ENCODE measurements at regions of chr5 and their contacts with region 1.

Region 1: DNA sequence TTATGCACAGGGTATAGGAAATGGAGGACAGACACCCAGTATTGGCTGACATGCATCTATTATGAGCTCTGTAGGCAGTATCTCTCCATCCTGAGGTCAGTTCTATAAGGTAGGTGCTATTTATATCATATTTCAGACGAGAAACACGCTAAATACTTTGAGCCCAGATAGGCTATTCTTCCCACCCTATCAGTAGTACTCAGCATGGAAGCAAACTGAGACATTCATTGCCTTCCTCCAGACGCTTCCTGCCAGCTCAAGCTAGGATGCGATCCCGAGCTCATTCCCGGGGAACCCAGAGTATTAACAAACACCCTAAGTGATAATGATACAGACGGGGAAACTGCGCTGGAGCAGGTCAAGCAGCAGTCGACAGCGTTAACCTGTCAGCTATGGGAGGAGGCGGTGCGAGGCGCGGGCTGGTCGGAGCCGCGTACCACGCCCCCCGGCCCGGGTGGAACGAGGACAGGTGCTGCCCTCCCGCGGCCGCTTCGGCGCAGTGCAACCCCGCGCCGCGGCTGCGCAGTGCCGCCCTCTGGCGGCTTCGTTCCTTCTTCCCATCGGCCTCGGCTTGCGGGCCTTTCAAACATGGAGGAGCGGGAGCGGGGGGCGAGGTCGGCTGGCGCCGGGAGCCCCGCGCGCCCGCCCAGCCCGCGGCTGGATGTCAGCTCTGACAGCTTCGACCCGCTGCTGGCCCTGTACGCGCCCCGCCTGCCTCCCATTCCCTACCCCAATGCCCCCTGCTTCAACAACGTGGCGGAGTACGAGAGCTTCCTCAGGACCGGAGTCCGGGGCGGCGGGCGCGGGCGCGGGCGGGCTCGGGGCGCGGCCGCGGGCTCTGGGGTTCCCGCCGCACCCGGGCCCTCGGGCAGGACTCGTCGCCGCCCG is at the start of gene LSM11:
- DNase-seq: peak; percentile 75 to 96 (median 88)
- ATAC-seq: peak; percentile 97
- H3K4me3 ChIP-seq: peak within 1 kb of the TSS; percentile 60
- H3K4me3 Mint-ChIP-seq: peak within 1 kb of the TSS; percentile 96
- H3K27ac ChIP-seq: no peak within 1 kb of the TSS
- H3K27ac Mint-ChIP-seq: peak within 1 kb of the TSS; percentile 68
- H3K4me1 ChIP-seq: peaks cover 20% of the 10 kb centered on the region
- H3K4me1 Mint-ChIP-seq: peaks cover 36% of the 10 kb centered on the region
- H3K27me3 ChIP-seq: no peaks in the 10 kb centered on the region
- H3K27me3 Mint-ChIP-seq: no peaks in the 10 kb centered on the region
- CTCF ChIP-seq: peak; percentile 99
- total RNA-seq, gene LSM11: 0.49 to 0.70 TPM

Region 2: GRCh38 chr5:157150995-157151394 is 592.4 kb before region 1 on chr5:
- CTCF ChIA-PET with region 1: no interaction called
- POLR2A ChIA-PET with region 1: no interaction called
- intact Hi-C with region 1: no loop called
- DNase-seq: no peak
- ATAC-seq: no peak
- H3K4me3 ChIP-seq: no peak overlapping the region
- H3K4me3 Mint-ChIP-seq: no peak overlapping the region
- H3K27ac ChIP-seq: no peak overlapping the region
- H3K27ac Mint-ChIP-seq: peak overlapping the region; percentile 22
- H3K4me1 ChIP-seq: peaks cover 38% of the 10 kb centered on the region
- H3K4me1 Mint-ChIP-seq: peaks cover 61% of the 10 kb centered on the region
- H3K27me3 ChIP-seq: no peaks in the 10 kb centered on the region
- H3K27me3 Mint-ChIP-seq: no peaks in the 10 kb centered on the region
- CTCF ChIP-seq: no peak

Region 3: GRCh38 chr5:157265714-157266285 is 477.6 kb before region 1 on chr5 and contains the start of gene CYFIP2:
- CTCF ChIA-PET with region 1: no interaction called
- POLR2A ChIA-PET with region 1: no interaction called
- intact Hi-C with region 1: loop called in 1 of 2 experiments (anchors 5 kb)
- DNase-seq: peak; percentile 75 to 94 (median 84)
- ATAC-seq: peak; percentile 84
- H3K4me3 ChIP-seq: peak within 1 kb of the TSS; percentile 79
- H3K4me3 Mint-ChIP-seq: peak within 1 kb of the TSS; percentile 99
- H3K27ac ChIP-seq: peak within 1 kb of the TSS; percentile 77 to 94
- H3K27ac Mint-ChIP-seq: peak within 1 kb of the TSS; percentile 97
- H3K4me1 ChIP-seq: peaks cover 63% of the 10 kb centered on the region
- H3K4me1 Mint-ChIP-seq: peaks cover 81% of the 10 kb centered on the region
- H3K27me3 ChIP-seq: no peaks in the 10 kb centered on the region
- H3K27me3 Mint-ChIP-seq: no peaks in the 10 kb centered on the region
- CTCF ChIP-seq: no peak
- total RNA-seq, gene CYFIP2: 271 to 287 TPM

Region 4: DNA sequence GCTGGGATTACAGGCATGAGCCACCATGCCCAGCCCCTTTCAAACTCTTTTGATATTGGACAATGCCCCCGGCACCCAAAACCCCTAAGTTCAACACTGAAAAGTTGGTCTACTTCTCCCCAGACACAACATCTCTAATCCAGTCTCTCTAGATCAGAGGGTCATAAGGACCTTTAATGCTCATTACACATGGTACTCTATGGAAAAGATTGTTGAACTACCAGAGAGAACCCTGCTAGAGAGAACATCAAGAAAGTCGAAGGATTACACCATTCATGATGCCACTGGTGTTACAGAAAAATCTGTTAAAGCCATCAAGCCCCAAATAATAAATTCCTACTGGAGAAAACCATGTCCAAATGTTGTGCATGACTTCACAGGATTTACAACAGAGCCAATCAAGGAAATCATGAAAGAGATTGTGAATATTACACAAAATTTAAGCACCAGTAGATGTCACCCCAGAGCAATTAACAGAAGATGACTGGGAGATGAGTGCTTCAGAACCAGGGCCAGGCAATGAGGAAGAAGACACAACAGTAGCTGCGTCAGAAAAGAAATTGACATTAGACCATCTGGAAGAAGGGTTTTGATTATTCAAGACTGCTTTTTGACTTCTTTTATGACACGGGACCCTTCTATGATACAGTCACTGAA is 311.7 kb before region 1 on chr5:
- CTCF ChIA-PET with region 1: interaction called, 16 read pairs
- POLR2A ChIA-PET with region 1: interaction called, 3 read pairs
- intact Hi-C with region 1: loop called (anchors 1 kb)
- DNase-seq: peak in 6 of 14 experiments; percentile 2 to 77 (median 54)
- ATAC-seq: peak; percentile 82
- H3K4me3 ChIP-seq: no peak overlapping the region
- H3K4me3 Mint-ChIP-seq: no peak overlapping the region
- H3K27ac ChIP-seq: no peak overlapping the region
- H3K27ac Mint-ChIP-seq: no peak overlapping the region
- H3K4me1 ChIP-seq: no peaks in the 10 kb centered on the region
- H3K4me1 Mint-ChIP-seq: peaks cover 5% of the 10 kb centered on the region
- H3K27me3 ChIP-seq: no peaks in the 10 kb centered on the region
- H3K27me3 Mint-ChIP-seq: no peaks in the 10 kb centered on the region
- CTCF ChIP-seq: peak; percentile 56

Region 5: GRCh38 chr5:157624144-157624543 is 119.3 kb before region 1 on chr5:
- CTCF ChIA-PET with region 1: no interaction called
- POLR2A ChIA-PET with region 1: no interaction called
- intact Hi-C with region 1: no loop called
- DNase-seq: no peak
- ATAC-seq: no peak
- H3K4me3 ChIP-seq: no peak overlapping the region
- H3K4me3 Mint-ChIP-seq: no peak overlapping the region
- H3K27ac ChIP-seq: no peak overlapping the region
- H3K27ac Mint-ChIP-seq: no peak overlapping the region
- H3K4me1 ChIP-seq: no peaks in the 10 kb centered on the region
- H3K4me1 Mint-ChIP-seq: no peaks in the 10 kb centered on the region
- H3K27me3 ChIP-seq: no peaks in the 10 kb centered on the region
- H3K27me3 Mint-ChIP-seq: no peaks in the 10 kb centered on the region
- CTCF ChIP-seq: no peak

Region 6: DNA sequence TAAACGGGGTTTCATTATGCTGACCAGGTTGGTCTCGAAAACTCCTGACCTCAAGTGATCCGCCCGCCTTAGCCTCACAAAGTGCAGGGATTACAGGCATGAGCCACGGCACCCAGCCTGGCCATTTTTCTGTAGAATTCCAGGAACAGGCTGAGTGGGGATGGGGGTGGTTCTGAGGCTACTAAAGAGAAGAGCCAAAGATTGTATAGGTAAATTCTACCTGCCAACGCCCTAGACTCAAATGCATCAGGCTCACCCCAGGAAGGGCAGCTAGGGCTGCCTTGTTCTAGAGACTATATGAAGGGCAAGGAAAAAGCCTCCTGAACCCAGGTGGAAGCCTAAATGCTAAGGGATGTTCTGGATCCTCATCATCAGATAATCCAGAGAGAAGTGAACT is 73.7 kb before region 1 on chr5:
- CTCF ChIA-PET with region 1: interaction called, 10 read pairs
- POLR2A ChIA-PET with region 1: interaction called, 6 read pairs
- intact Hi-C with region 1: loop called (anchors 1 kb)
- DNase-seq: no peak
- ATAC-seq: no peak
- H3K4me3 ChIP-seq: no peak overlapping the region
- H3K4me3 Mint-ChIP-seq: peak overlapping the region; percentile 87
- H3K27ac ChIP-seq: no peak overlapping the region
- H3K27ac Mint-ChIP-seq: no peak overlapping the region
- H3K4me1 ChIP-seq: peaks cover 16% of the 10 kb centered on the region
- H3K4me1 Mint-ChIP-seq: peaks cover 23% of the 10 kb centered on the region
- H3K27me3 ChIP-seq: peaks cover 12 to 14% of the 10 kb centered on the region in 2 experiments
- H3K27me3 Mint-ChIP-seq: peaks cover 12% of the 10 kb centered on the region
- CTCF ChIP-seq: no peak

Region 7: DNA sequence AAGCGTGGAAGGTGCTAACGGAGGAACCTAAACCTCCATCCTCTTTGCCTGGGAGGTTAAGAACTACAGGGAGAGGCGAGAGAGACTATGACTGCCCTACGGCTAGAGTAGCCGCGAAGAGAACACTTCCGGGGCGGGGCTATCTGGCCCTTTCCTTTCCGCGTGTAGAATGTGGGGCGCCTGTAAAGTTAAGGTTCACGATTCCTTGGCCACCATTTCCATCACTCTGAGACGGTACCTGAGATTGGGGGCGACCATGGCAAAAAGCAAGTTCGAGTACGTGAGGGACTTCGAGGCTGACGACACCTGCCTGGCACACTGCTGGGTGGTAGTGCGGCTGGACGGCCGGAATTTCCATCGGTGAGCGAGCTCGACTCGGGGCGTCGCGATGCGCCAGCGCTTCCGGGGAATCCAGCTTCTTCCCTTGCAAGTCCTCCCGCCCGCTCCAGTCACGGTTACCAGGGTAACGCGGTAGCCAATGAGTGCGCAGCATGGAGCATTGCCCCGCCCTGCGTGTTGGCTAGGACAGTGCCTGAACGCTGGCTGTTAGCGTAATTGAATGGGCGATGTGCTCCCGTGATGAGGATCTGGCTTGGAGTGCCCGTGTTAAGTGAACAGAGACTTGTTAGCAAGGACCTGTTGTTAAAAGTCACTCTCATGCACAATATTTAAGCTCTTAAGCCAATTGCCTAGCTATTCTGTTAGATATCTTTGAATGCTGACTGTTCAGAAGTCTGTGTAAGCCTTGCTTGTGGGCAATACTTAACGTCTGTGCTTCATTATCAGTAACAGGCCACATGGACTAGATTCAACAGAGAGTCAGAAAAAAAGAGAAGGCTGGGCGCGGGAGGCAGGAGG is 11.9 kb before region 1 on chr5 and contains the start of gene THG1L:
- CTCF ChIA-PET with region 1: interaction called, 54 read pairs
- POLR2A ChIA-PET with region 1: interaction called, 28 read pairs
- intact Hi-C with region 1: loop called (anchors 1 kb)
- DNase-seq: peak; percentile 94 to 99 (median 97)
- ATAC-seq: peak; percentile 97
- H3K4me3 ChIP-seq: peak within 1 kb of the TSS; percentile 90
- H3K4me3 Mint-ChIP-seq: peak within 1 kb of the TSS; percentile 94
- H3K27ac ChIP-seq: peak within 1 kb of the TSS; percentile 79 to 89
- H3K27ac Mint-ChIP-seq: peak within 1 kb of the TSS; percentile 91
- H3K4me1 ChIP-seq: peaks cover 9% of the 10 kb centered on the region
- H3K4me1 Mint-ChIP-seq: peaks cover 16% of the 10 kb centered on the region
- H3K27me3 ChIP-seq: no peaks in the 10 kb centered on the region
- H3K27me3 Mint-ChIP-seq: no peaks in the 10 kb centered on the region
- CTCF ChIP-seq: no peak
- total RNA-seq, gene THG1L: 4.1 to 4.6 TPM

Measured in CD4-positive, alpha-beta T cell (primary cell).